Naive thymus-derived CD4-positive, alpha-beta T cell (primary cell): ENCODE measurements at regions of chr6 and their contacts with region 1.

Region 1: GRCh38 chr6:144104898-144105487 is 9.6 kb upstream of the SF3B5 start:
- DNase-seq: peak in 7 of 9 donors; percentile 30 to 67 (median 61)
- ATAC-seq: peak; percentile 88
- H3K4me3 ChIP-seq: no peak overlapping the region
- H3K4me3 Mint-ChIP-seq: no peak overlapping the region
- H3K27ac ChIP-seq: no peak overlapping the region
- H3K27ac Mint-ChIP-seq: peak overlapping the region in 1 of 9 donors; percentile 29
- H3K4me1 ChIP-seq: no peaks in the 10 kb centered on the region
- H3K4me1 Mint-ChIP-seq: peaks cover 0 to 7% (median 4%) of the 10 kb centered on the region in 7 donors
- H3K27me3 ChIP-seq: no peaks in the 10 kb centered on the region
- H3K27me3 Mint-ChIP-seq: peaks cover 0 to 6% (median 0%) of the 10 kb centered on the region in 5 donors

Region 2: GRCh38 chr6:144482142-144482541 is 377.1 kb after region 1 on chr6:
- CTCF ChIA-PET with region 1: interaction called, 28 read pairs
- POLR2A ChIA-PET with region 1: interaction called, 4 read pairs
- intact Hi-C with region 1: loop called (anchors 1 kb)
- DNase-seq: peak; percentile 27 to 67 (median 61)
- ATAC-seq: peak; percentile 77
- H3K4me3 ChIP-seq: no peak overlapping the region
- H3K4me3 Mint-ChIP-seq: no peak overlapping the region
- H3K27ac ChIP-seq: no peak overlapping the region
- H3K27ac Mint-ChIP-seq: peak overlapping the region in 6 of 9 donors; percentile 12 to 88 (median 38)
- H3K4me1 ChIP-seq: no peaks in the 10 kb centered on the region
- H3K4me1 Mint-ChIP-seq: peaks cover 0 to 20% (median 4%) of the 10 kb centered on the region in 7 donors
- H3K27me3 ChIP-seq: no peaks in the 10 kb centered on the region
- H3K27me3 Mint-ChIP-seq: no peaks in the 10 kb centered on the region

Region 3: DNA sequence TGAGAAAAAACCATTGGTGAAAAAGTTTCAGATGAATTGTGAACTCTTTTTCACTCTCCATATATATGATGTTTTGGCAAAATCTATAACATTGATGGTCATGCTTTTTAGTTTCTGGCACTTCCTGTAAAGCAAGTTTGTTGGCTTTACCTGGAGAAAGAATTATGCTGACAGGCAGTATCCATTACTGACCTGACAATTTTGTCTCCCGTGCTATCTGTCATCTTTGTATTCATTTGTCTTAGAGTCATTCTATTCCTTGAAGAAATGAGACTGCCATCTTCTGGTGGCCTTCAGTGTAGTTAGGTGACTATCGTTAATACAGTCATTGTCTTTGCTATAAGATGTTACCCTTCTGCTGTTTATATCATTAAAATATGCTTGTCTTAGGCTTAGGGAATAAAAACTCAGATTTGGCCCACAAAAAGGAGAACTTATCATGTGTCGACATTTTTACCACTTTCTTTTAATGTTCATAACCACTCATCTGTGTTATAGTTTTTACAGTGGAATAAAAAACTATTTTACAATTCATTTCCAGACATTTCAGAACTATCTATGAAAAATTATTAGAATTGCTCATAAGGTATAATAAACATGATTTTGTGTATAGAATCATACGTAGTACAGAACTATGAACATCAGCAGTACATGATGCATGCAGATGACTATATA is 923.3 kb after region 1 on chr6:
- CTCF ChIA-PET with region 1: no interaction called
- POLR2A ChIA-PET with region 1: no interaction called
- intact Hi-C with region 1: loop called (anchors 2 to 10 kb)
- DNase-seq: peak in 2 of 9 donors; percentile 2 to 5
- ATAC-seq: peak; percentile 41
- H3K4me3 ChIP-seq: no peak overlapping the region
- H3K4me3 Mint-ChIP-seq: no peak overlapping the region
- H3K27ac ChIP-seq: no peak overlapping the region
- H3K27ac Mint-ChIP-seq: no peak overlapping the region
- H3K4me1 ChIP-seq: no peaks in the 10 kb centered on the region
- H3K4me1 Mint-ChIP-seq: no peaks in the 10 kb centered on the region
- H3K27me3 ChIP-seq: no peaks in the 10 kb centered on the region
- H3K27me3 Mint-ChIP-seq: peaks cover 18 to 41% (median 30%) of the 10 kb centered on the region in 5 donors

Region 4: GRCh38 chr6:145633981-145634627 is 1529.1 kb after region 1 on chr6:
- CTCF ChIA-PET with region 1: no interaction called
- POLR2A ChIA-PET with region 1: no interaction called
- intact Hi-C with region 1: loop called in 1 of 2 experiments (anchors 5 kb)
- DNase-seq: peak; percentile 31 to 76 (median 59)
- ATAC-seq: peak; percentile 85
- H3K4me3 ChIP-seq: no peak overlapping the region
- H3K4me3 Mint-ChIP-seq: no peak overlapping the region
- H3K27ac ChIP-seq: no peak overlapping the region
- H3K27ac Mint-ChIP-seq: no peak overlapping the region
- H3K4me1 ChIP-seq: no peaks in the 10 kb centered on the region
- H3K4me1 Mint-ChIP-seq: peaks cover 2 to 11% (median 7%) of the 10 kb centered on the region in 7 donors
- H3K27me3 ChIP-seq: no peaks in the 10 kb centered on the region
- H3K27me3 Mint-ChIP-seq: no peaks in the 10 kb centered on the region